CD4-positive, alpha-beta T cell (primary cell): ENCODE measurements at regions of chr5 and their contacts with region 1.

Region 1: GRCh38 chr5:177446200-177447065 is at the start of gene PRR7:
- DNase-seq: peak; percentile 56 to 93 (median 72)
- ATAC-seq: peak; percentile 43
- H3K4me3 ChIP-seq: peak within 1 kb of the TSS; percentile 56
- H3K4me3 Mint-ChIP-seq: peak within 1 kb of the TSS; percentile 80
- H3K27ac ChIP-seq: peak within 1 kb of the TSS; percentile 73 to 89
- H3K27ac Mint-ChIP-seq: peak within 1 kb of the TSS; percentile 88
- H3K4me1 ChIP-seq: peaks cover 73% of the 10 kb centered on the region
- H3K4me1 Mint-ChIP-seq: peaks cover 56% of the 10 kb centered on the region
- H3K27me3 ChIP-seq: no peaks in the 10 kb centered on the region
- H3K27me3 Mint-ChIP-seq: no peaks in the 10 kb centered on the region
- CTCF ChIP-seq: no peak
- total RNA-seq, gene PRR7: 23.3 to 23.5 TPM

Region 2: GRCh38 chr5:177431317-177432142 is 14.9 kb before region 1 on chr5:
- CTCF ChIA-PET with region 1: interaction called, 9 read pairs
- POLR2A ChIA-PET with region 1: interaction called, 661 read pairs
- intact Hi-C with region 1: loop called (anchors 1 to 2 kb)
- DNase-seq: peak in 12 of 14 experiments; percentile 45 to 93 (median 70)
- ATAC-seq: peak; percentile 43
- H3K4me3 ChIP-seq: peak overlapping the region; percentile 65
- H3K4me3 Mint-ChIP-seq: peak overlapping the region; percentile 95
- H3K27ac ChIP-seq: peak overlapping the region; percentile 87 to 92
- H3K27ac Mint-ChIP-seq: peak overlapping the region; percentile 96
- H3K4me1 ChIP-seq: peaks cover 96% of the 10 kb centered on the region
- H3K4me1 Mint-ChIP-seq: peaks cover 62% of the 10 kb centered on the region
- H3K27me3 ChIP-seq: no peaks in the 10 kb centered on the region
- H3K27me3 Mint-ChIP-seq: no peaks in the 10 kb centered on the region
- CTCF ChIP-seq: no peak

Region 3: GRCh38 chr5:177465044-177465443 is 18.6 kb after region 1 on chr5:
- CTCF ChIA-PET with region 1: no interaction called
- POLR2A ChIA-PET with region 1: no interaction called
- intact Hi-C with region 1: no loop called
- DNase-seq: no peak
- ATAC-seq: no peak
- H3K4me3 ChIP-seq: no peak overlapping the region
- H3K4me3 Mint-ChIP-seq: no peak overlapping the region
- H3K27ac ChIP-seq: no peak overlapping the region
- H3K27ac Mint-ChIP-seq: no peak overlapping the region
- H3K4me1 ChIP-seq: peaks cover 14% of the 10 kb centered on the region
- H3K4me1 Mint-ChIP-seq: no peaks in the 10 kb centered on the region
- H3K27me3 ChIP-seq: no peaks in the 10 kb centered on the region
- H3K27me3 Mint-ChIP-seq: no peaks in the 10 kb centered on the region
- CTCF ChIP-seq: no peak

Region 4: GRCh38 chr5:177524941-177525618 is 78.6 kb after region 1 on chr5:
- CTCF ChIA-PET with region 1: no interaction called
- POLR2A ChIA-PET with region 1: no interaction called
- intact Hi-C with region 1: no loop called
- DNase-seq: no peak
- ATAC-seq: no peak
- H3K4me3 ChIP-seq: no peak overlapping the region
- H3K4me3 Mint-ChIP-seq: no peak overlapping the region
- H3K27ac ChIP-seq: no peak overlapping the region
- H3K27ac Mint-ChIP-seq: no peak overlapping the region
- H3K4me1 ChIP-seq: peaks cover 17% of the 10 kb centered on the region
- H3K4me1 Mint-ChIP-seq: peaks cover 19% of the 10 kb centered on the region
- H3K27me3 ChIP-seq: no peaks in the 10 kb centered on the region
- H3K27me3 Mint-ChIP-seq: no peaks in the 10 kb centered on the region
- CTCF ChIP-seq: no peak